ENCODE measurements at regions of chr18 and their contacts with region 1.

Region 1: DNA sequence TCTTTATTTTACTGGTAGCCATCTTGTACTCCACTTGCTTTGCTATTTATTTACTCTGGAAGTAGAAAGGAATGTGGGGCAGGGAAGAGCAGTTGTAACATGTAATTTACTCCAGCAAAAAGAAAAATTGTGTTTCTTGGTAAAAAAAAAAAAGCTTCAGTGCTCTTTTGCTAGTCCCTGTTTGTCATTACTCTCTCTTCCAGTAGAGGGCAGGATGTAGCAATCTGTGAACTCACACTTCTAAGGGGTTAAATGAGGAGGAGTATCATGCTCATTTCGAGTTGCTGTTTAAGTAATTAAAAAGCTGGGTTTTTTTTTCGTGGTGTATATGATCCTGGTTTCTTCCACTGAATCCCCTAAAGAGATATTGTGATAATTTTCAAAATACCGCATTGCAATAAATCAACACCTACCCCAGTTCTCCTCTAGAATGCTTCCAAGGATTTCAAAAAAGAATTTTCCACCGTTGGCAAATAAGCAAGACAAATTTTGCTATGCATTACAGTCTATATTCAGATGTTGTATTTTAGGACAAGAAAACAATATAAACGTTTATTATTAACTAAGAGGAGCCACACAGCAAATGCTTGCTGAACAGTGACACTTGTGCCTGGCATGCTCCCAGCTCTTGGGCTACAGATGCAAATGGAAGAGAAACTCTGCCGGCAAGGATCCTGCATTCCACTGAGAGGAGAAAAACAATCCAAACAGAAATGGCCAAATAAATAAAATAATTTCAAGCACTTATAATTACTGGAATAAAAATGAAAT is 261.6 kb downstream of the ASXL3 start:
- DNase-seq: no peak
- ATAC-seq: no peak
- H3K4me3 ChIP-seq: peak overlapping the region in 1 of 10 donors; percentile 29
- H3K27ac ChIP-seq: no peak overlapping the region
- H3K4me1 ChIP-seq: peaks cover 0 to 5% (median 0%) of the 10 kb centered on the region in 9 donors
- H3K27me3 ChIP-seq: peaks cover 0 to 7% (median 0%) of the 10 kb centered on the region in 7 donors
- CTCF ChIP-seq: peak in 8 of 9 donors; percentile 15 to 71 (median 59)

Region 2: DNA sequence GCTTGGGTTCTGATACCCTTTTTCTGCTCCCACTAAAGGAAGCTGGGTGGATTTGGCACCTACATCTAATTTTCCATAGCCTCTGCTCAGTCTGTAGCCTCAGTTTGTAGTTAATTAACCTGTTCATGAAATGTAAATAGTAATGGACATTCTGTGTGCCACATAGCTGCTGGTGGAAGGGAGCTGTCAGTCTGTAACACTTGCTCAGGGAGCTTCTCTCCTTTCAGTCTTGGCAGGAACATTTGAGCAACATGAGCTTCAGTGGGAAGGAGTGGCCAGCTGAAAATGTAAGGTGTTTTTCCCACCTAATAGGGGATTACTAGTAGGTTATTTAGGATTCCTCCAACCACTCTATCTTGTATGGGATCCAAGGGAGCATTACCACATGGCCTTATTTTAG is 58.2 kb before region 1 on chr18:
- intact Hi-C with region 1: loop called in 1 of 10 experiments (anchors 10 kb)
- DNase-seq: no peak
- ATAC-seq: no peak
- H3K4me3 ChIP-seq: no peak overlapping the region
- H3K27ac ChIP-seq: no peak overlapping the region
- H3K4me1 ChIP-seq: no peaks in the 10 kb centered on the region
- H3K27me3 ChIP-seq: peaks cover 0 to 10% (median 0%) of the 10 kb centered on the region in 7 donors
- CTCF ChIP-seq: no peak

Measured in heart right ventricle (tissue), 16 donors.